Activated CD4-positive, alpha-beta T cell treated with anti-CD3 and anti-CD28 coated beads, Interleukin-2, amount 10 ng/mL, durations not matched to agents 24 days and 14 days (primary cell): ENCODE measurements at regions of chr9 and their contacts with region 1.

Region 1: DNA sequence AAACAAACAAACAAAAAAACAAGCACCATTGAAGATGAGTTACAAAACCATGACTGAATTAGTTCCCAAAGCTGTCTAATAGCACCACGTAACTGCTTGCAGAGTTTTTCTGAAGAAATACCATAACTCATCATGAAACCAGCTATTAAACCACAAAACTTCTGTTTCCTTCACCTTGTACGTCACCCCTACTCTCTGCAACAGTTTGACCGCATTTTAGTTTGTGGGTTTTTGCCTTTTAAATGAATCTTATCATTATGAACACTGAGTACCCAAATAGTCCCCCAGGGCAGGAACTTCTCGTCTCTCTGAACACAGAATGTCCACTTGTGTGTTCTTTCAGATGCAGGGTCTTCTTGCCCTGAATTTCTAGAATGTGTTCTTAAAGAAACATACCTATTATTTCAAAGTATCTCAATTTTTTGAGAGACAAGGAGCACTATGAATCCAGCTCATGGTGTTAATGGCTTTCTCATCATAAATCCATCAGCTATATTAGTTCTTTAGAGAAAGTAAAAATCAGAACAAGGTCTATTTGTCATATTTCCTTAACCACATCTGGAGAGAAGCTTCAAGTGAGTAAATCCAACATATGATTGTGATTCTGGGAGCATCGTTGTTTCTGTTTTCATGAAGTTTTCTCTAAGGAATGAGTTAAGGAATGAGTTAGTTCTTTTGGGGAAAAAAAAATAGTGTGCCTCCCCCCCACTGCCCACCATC is 210.6 kb downstream of the AUH start:
- DNase-seq: peak; percentile 91
- H3K4me3 Mint-ChIP-seq: peak overlapping the region; percentile 61
- H3K27ac Mint-ChIP-seq: peak overlapping the region; percentile 98
- H3K4me1 Mint-ChIP-seq: peaks cover 82% of the 10 kb centered on the region
- H3K27me3 Mint-ChIP-seq: no peaks in the 10 kb centered on the region

Region 2: GRCh38 chr9:90504486-90504885 is 646.7 kb before region 1 on chr9:
- intact Hi-C with region 1: no loop called
- DNase-seq: no peak
- H3K4me3 Mint-ChIP-seq: no peak overlapping the region
- H3K27ac Mint-ChIP-seq: no peak overlapping the region
- H3K4me1 Mint-ChIP-seq: peaks cover under 1% of the 10 kb centered on the region
- H3K27me3 Mint-ChIP-seq: no peaks in the 10 kb centered on the region

Region 3: GRCh38 chr9:90964101-90965020 is 186.8 kb before region 1 on chr9:
- intact Hi-C with region 1: loop called (anchors 1 kb)
- DNase-seq: no peak
- H3K4me3 Mint-ChIP-seq: peak overlapping the region; percentile 18
- H3K27ac Mint-ChIP-seq: peak overlapping the region; percentile 25
- H3K4me1 Mint-ChIP-seq: peaks cover 25% of the 10 kb centered on the region
- H3K27me3 Mint-ChIP-seq: peaks cover 2% of the 10 kb centered on the region

Region 4: DNA sequence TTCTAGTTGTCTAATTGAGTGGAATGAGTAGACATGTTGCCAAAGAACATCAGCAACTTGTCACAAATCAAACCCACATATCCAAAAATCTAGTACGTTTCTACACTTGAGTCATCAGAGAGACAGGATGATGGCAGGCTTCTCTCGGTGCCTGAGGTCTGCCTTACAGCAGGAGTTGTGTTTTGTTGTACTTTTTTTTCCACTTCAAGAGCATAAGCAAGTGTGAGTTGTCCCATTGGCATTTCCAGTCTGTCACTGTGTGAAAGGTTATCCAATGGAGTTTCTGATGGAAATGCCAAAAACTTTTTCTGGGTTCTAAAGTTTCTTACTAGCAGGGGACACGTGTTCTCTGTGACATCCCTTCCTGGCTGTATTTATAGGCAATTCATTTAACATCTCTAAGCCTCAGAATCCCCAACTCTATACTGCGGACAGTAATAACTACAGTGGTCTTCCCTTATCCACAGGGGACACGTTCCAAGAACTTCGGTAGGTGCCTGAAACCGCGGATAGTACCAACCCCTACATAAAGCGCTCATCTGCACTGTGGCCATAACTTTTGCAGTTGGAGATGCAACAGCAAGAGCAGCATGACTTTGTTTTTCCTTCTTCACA is 103.1 kb before region 1 on chr9:
- intact Hi-C with region 1: loop called (anchors 1 kb)
- DNase-seq: peak; percentile 83
- H3K4me3 Mint-ChIP-seq: peak overlapping the region; percentile 72
- H3K27ac Mint-ChIP-seq: peak overlapping the region; percentile 93
- H3K4me1 Mint-ChIP-seq: peaks cover 64% of the 10 kb centered on the region
- H3K27me3 Mint-ChIP-seq: no peaks in the 10 kb centered on the region

Region 5: GRCh38 chr9:91101611-91102168 is 49.5 kb before region 1 on chr9:
- intact Hi-C with region 1: loop called (anchors 1 kb)
- DNase-seq: peak; percentile 97
- H3K4me3 Mint-ChIP-seq: peak overlapping the region; percentile 70
- H3K27ac Mint-ChIP-seq: peak overlapping the region; percentile 89
- H3K4me1 Mint-ChIP-seq: peaks cover 67% of the 10 kb centered on the region
- H3K27me3 Mint-ChIP-seq: no peaks in the 10 kb centered on the region

Region 6: DNA sequence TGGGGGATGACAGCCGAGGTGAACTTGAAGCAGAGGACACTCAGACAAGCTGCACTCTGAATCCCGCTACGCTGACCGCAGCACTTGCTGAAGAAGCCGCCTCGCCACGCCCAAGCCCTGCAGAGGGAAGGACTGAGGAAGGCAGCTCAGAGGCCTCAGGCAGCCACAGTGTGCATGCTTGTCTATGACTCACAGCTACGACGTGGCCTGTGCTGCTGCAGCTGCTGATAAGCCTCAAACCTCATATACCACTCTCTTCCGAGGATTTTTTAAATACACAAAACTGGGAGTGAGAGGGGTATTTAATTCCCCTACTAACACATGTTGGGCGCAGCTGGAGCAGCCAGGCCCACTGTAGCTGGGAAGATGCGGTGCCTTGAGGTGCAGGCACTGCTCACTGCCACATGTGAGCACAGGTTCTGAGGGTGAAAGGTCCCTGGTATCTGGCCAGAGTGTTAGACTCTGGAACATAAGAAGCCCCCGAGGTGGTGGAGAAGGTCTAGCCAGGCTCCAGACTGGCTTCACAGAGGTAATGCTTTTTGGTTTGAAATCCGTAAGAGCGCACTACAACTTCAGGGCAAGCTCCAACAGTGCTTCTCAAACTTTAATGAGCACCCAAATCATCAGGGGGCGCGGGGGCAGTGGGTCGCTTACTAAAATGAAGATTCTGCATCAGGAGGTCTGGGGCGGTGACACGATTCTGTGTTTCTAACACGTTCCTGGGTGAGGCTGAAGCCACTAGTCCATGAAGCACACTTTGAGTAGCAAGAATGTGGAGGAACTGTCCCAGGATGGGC is 13.8 kb after region 1 on chr9:
- intact Hi-C with region 1: loop called (anchors 1 kb)
- DNase-seq: peak; percentile 94
- H3K4me3 Mint-ChIP-seq: peak overlapping the region; percentile 81
- H3K27ac Mint-ChIP-seq: peak overlapping the region; percentile 98
- H3K4me1 Mint-ChIP-seq: peaks cover 55% of the 10 kb centered on the region
- H3K27me3 Mint-ChIP-seq: no peaks in the 10 kb centered on the region

Region 7: GRCh38 chr9:91207729-91208418 is 56.7 kb after region 1 on chr9:
- intact Hi-C with region 1: loop called (anchors 1 kb)
- DNase-seq: peak; percentile 83
- H3K4me3 Mint-ChIP-seq: peak overlapping the region; percentile 68
- H3K27ac Mint-ChIP-seq: peak overlapping the region; percentile 98
- H3K4me1 Mint-ChIP-seq: peaks cover 46% of the 10 kb centered on the region
- H3K27me3 Mint-ChIP-seq: no peaks in the 10 kb centered on the region

Region 8: DNA sequence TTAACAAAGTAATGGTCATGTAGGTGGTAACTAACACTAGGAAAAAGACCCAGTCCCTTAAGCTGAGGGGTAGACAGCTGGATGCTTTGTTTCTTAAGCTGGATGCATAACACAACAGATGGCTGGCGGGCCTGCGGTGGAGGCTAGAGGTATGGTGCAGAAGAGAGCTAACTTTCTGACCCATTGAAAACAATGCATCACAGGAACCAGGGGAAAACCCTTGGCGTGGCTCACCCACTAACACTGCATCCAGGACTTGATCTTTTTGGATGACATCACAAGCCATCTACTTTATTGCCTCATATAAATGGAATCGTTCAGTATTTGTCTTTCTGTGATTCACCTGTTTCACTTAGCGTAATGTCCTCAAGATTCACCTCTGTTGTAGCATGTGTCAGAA is 71.8 kb after region 1 on chr9:
- intact Hi-C with region 1: no loop called
- DNase-seq: no peak
- H3K4me3 Mint-ChIP-seq: no peak overlapping the region
- H3K27ac Mint-ChIP-seq: no peak overlapping the region
- H3K4me1 Mint-ChIP-seq: peaks cover 15% of the 10 kb centered on the region
- H3K27me3 Mint-ChIP-seq: no peaks in the 10 kb centered on the region

Region 9: GRCh38 chr9:91359734-91360470 is 208.7 kb after region 1 on chr9:
- intact Hi-C with region 1: loop called (anchors 1 kb)
- DNase-seq: peak; percentile 74
- H3K4me3 Mint-ChIP-seq: peak overlapping the region; percentile 93
- H3K27ac Mint-ChIP-seq: peak overlapping the region; percentile 99
- H3K4me1 Mint-ChIP-seq: peaks cover 58% of the 10 kb centered on the region
- H3K27me3 Mint-ChIP-seq: no peaks in the 10 kb centered on the region